B cell (primary cell): ENCODE measurements at regions of chr7 and their contacts with region 1.

Region 1: DNA sequence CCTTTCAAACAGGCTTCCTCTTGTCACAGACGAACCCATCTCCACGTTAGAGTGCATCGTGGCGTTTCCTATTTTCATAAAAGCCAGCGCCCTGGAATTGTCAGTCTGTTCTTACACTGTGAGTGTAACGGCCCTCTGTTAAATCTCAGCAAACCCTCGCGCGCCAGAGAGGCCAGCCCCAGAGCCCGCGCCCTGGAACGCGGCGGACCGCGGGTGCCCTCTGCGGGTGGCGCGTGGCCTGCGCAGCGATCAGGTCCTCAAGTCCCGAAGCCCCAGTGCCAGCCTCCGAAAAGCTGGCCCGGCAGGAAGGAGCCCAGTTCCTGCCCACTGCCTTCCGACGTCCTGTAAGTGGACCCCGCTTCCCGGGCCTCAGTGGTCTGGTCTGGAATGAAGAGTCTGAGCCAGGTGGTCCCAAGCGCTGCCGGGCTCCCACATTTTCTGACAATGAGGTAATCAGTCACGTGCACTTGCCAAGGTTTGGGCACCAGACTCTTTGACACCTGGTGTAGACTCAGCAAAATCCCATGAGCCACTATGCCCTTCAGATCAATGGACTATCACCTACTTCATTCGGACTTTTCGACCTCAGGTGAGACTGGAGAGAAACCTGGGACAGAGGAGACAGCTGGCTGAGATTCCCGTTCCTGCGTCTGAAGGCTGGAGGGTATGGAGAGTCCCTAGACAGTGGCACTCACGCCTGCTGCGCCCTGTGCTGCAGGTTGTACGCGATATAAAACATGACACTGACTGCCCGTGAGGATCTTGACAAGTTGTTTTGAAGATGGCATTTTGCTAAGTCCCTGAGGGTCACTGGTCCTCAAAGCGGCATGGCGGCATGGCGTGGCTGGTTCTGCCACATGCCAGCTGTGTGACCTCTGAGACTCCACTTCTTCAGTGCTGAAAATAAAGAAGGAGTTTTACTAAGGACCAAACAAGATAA is 109.4 kb upstream of the LANCL2 start:
- DNase-seq: peak; percentile 73
- ATAC-seq: peak; percentile 93
- H3K4me3 ChIP-seq: peak overlapping the region; percentile 8 to 55 (median 48)
- H3K4me3 Mint-ChIP-seq: peak overlapping the region; percentile 88
- H3K27ac ChIP-seq: no peak overlapping the region
- H3K27ac Mint-ChIP-seq: no peak overlapping the region
- H3K4me1 ChIP-seq: peaks cover 16% of the 10 kb centered on the region in 2 donors
- H3K4me1 Mint-ChIP-seq: peaks cover 11% of the 10 kb centered on the region
- H3K27me3 ChIP-seq: peaks cover 0 to 29% (median 16%) of the 10 kb centered on the region in 4 experiments
- H3K27me3 Mint-ChIP-seq: peaks cover 52% of the 10 kb centered on the region
- CTCF ChIP-seq: peak; percentile 70

Region 2: GRCh38 chr7:54773472-54774399 is 482.0 kb before region 1 on chr7:
- CTCF ChIA-PET with region 1: interaction called, 150 read pairs
- POLR2A ChIA-PET with region 1: no interaction called
- intact Hi-C with region 1: loop called (anchors 1 kb)
- DNase-seq: peak; percentile 61
- ATAC-seq: peak; percentile 78
- H3K4me3 ChIP-seq: peak overlapping the region in 4 of 5 experiments; percentile 29 to 46 (median 40)
- H3K4me3 Mint-ChIP-seq: peak overlapping the region; percentile 83
- H3K27ac ChIP-seq: no peak overlapping the region
- H3K27ac Mint-ChIP-seq: peak overlapping the region; percentile 35
- H3K4me1 ChIP-seq: no peaks in the 10 kb centered on the region
- H3K4me1 Mint-ChIP-seq: peaks cover 9% of the 10 kb centered on the region
- H3K27me3 ChIP-seq: peaks cover 0 to 19% (median 9%) of the 10 kb centered on the region in 4 experiments
- H3K27me3 Mint-ChIP-seq: peaks cover 28% of the 10 kb centered on the region
- CTCF ChIP-seq: peak; percentile 85

Region 3: GRCh38 chr7:54788664-54789063 is 467.1 kb before region 1 on chr7:
- CTCF ChIA-PET with region 1: interaction called, 17 read pairs
- POLR2A ChIA-PET with region 1: no interaction called
- intact Hi-C with region 1: loop called (anchors 5 kb)
- DNase-seq: peak; percentile 7
- ATAC-seq: no peak
- H3K4me3 ChIP-seq: no peak overlapping the region
- H3K4me3 Mint-ChIP-seq: no peak overlapping the region
- H3K27ac ChIP-seq: no peak overlapping the region
- H3K27ac Mint-ChIP-seq: no peak overlapping the region
- H3K4me1 ChIP-seq: no peaks in the 10 kb centered on the region
- H3K4me1 Mint-ChIP-seq: no peaks in the 10 kb centered on the region
- H3K27me3 ChIP-seq: peaks cover 0 to 12% (median 7%) of the 10 kb centered on the region in 4 experiments
- H3K27me3 Mint-ChIP-seq: peaks cover 54% of the 10 kb centered on the region
- CTCF ChIP-seq: no peak

Region 4: GRCh38 chr7:55048221-55048859 is 207.4 kb before region 1 on chr7:
- CTCF ChIA-PET with region 1: interaction called, 37 read pairs
- POLR2A ChIA-PET with region 1: no interaction called
- intact Hi-C with region 1: no loop called
- DNase-seq: no peak
- ATAC-seq: no peak
- H3K4me3 ChIP-seq: no peak overlapping the region
- H3K4me3 Mint-ChIP-seq: no peak overlapping the region
- H3K27ac ChIP-seq: no peak overlapping the region
- H3K27ac Mint-ChIP-seq: no peak overlapping the region
- H3K4me1 ChIP-seq: no peaks in the 10 kb centered on the region
- H3K4me1 Mint-ChIP-seq: no peaks in the 10 kb centered on the region
- H3K27me3 ChIP-seq: no peaks in the 10 kb centered on the region
- H3K27me3 Mint-ChIP-seq: peaks cover 7% of the 10 kb centered on the region
- CTCF ChIP-seq: no peak

Region 5: GRCh38 chr7:55073945-55074499 is 181.7 kb before region 1 on chr7:
- CTCF ChIA-PET with region 1: interaction called, 5 read pairs
- POLR2A ChIA-PET with region 1: no interaction called
- intact Hi-C with region 1: loop called (anchors 2 kb)
- DNase-seq: peak; percentile 61
- ATAC-seq: peak; percentile 91
- H3K4me3 ChIP-seq: peak overlapping the region in 3 of 5 experiments; percentile 13 to 42 (median 40)
- H3K4me3 Mint-ChIP-seq: peak overlapping the region; percentile 84
- H3K27ac ChIP-seq: peak overlapping the region; percentile 71 to 74
- H3K27ac Mint-ChIP-seq: peak overlapping the region; percentile 95
- H3K4me1 ChIP-seq: peaks cover 12 to 15% of the 10 kb centered on the region in 2 donors
- H3K4me1 Mint-ChIP-seq: peaks cover 22% of the 10 kb centered on the region
- H3K27me3 ChIP-seq: peaks cover 0 to 14% (median 3%) of the 10 kb centered on the region in 4 experiments
- H3K27me3 Mint-ChIP-seq: no peaks in the 10 kb centered on the region
- CTCF ChIP-seq: no peak

Region 6: DNA sequence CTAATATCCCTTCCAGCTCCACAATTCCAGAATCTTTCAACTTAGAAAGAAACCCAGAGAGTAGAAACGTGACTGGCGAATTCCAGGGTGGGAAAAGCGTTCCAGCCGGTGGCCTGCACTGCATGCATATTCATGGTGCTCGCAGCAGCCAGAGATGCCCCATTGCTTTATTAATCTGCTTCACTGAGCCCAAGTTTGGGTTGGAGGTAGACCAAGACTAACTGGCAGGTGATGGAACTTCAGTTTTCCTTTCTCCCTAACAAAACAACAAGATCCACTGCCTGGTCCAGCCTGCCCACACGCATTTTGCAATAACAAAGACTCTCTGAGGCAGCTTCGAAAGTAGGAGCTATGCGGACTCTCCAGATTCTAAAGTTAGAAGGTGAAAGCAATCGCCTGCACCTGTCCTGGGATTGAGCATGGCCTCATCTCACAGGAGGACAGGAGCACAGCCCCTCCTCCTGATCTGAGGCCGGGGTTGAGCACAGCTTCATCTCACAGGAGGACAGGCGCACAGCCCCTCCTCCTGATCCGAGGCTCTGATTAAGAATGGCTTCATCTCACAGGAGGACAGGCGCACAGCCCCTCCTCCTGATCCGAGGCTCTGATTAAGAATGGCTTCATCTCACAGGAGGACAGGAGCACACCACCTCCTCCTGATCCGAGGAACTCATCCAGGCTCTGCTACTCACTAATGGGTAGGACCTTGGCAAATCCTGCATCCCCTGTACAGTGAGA is 18.4 kb before region 1 on chr7:
- CTCF ChIA-PET with region 1: interaction called, 15 read pairs
- POLR2A ChIA-PET with region 1: no interaction called
- intact Hi-C with region 1: no loop called
- DNase-seq: no peak
- ATAC-seq: no peak
- H3K4me3 ChIP-seq: no peak overlapping the region
- H3K4me3 Mint-ChIP-seq: no peak overlapping the region
- H3K27ac ChIP-seq: no peak overlapping the region
- H3K27ac Mint-ChIP-seq: no peak overlapping the region
- H3K4me1 ChIP-seq: no peaks in the 10 kb centered on the region
- H3K4me1 Mint-ChIP-seq: no peaks in the 10 kb centered on the region
- H3K27me3 ChIP-seq: peaks cover 0 to 7% (median 0%) of the 10 kb centered on the region in 4 experiments
- H3K27me3 Mint-ChIP-seq: peaks cover 18% of the 10 kb centered on the region
- CTCF ChIP-seq: no peak